Aorta (tissue), 5 donors: ENCODE measurements at regions of chr2 and their contacts with region 1.

Region 1: GRCh38 chr2:168992591-168993349 is 38.4 kb downstream of the ABCB11 start:
- DNase-seq: no peak
- ATAC-seq: no peak
- H3K4me3 ChIP-seq: no peak overlapping the region
- H3K27ac ChIP-seq: no peak overlapping the region
- H3K4me1 ChIP-seq: no peaks in the 10 kb centered on the region
- H3K27me3 ChIP-seq: no peaks in the 10 kb centered on the region

Region 2: GRCh38 chr2:168961450-168962229 is 31.1 kb before region 1 on chr2:
- intact Hi-C with region 1: loop called in 1 of 2 experiments (anchors 2 kb)
- DNase-seq: no peak
- ATAC-seq: peak; percentile 90
- H3K4me3 ChIP-seq: no peak overlapping the region
- H3K27ac ChIP-seq: no peak overlapping the region
- H3K4me1 ChIP-seq: no peaks in the 10 kb centered on the region
- H3K27me3 ChIP-seq: no peaks in the 10 kb centered on the region

Region 3: DNA sequence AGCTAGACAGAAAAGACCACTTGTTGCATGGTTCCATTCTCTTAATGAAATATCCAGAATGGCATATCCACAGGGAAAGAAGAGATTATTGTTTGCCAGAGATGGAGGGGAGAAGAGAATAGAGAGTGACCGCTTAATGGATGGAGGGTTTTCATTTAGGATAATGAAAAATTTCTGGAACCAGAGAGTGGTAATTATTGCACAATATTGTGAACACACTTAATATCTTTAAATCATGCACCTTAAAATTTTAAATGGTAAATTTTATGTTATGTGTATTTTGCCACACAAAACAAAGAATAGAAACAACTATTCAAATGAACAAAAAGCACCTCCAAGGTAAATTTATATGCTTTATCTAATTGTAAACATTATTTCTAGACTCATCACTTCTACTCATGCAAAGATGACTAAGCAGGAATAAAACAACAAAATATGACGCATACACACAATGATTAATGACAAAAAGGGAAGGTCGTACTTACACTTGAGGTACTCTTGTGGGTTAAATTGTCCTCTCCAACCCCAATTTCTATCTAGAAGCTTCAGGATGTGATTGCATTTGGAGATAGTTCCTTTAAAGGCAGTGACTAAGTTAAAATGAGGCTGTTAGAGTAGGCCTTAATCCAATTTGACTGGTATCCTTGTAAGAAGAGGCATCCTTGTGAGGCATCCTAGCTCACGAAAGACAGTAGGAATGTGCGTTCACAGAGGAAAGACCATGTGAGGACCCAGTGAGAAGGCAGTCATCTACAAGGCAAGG is 57.9 kb after region 1 on chr2:
- intact Hi-C with region 1: no loop called
- DNase-seq: no peak
- ATAC-seq: no peak
- H3K4me3 ChIP-seq: no peak overlapping the region
- H3K27ac ChIP-seq: no peak overlapping the region
- H3K4me1 ChIP-seq: no peaks in the 10 kb centered on the region
- H3K27me3 ChIP-seq: no peaks in the 10 kb centered on the region

Region 4: DNA sequence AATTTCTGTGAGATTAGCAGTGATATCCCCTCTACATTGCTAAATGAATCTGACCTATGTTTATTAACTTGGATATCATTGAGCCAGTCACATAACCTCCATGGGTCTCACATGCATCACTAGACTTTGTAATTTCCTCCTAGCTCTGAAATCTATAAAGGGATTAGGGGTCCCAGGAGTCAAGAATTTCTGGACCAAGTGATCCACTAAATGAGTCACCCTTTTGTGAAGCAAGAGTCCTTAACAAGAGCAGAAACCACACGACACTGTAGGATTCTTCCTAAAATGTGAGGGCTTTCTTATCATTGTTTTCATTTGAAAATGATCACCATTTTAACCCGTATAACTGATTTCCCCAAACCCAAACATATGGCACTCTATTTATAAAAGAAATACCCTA is 166.9 kb after region 1 on chr2:
- intact Hi-C with region 1: no loop called
- DNase-seq: no peak
- ATAC-seq: no peak
- H3K4me3 ChIP-seq: no peak overlapping the region
- H3K27ac ChIP-seq: no peak overlapping the region
- H3K4me1 ChIP-seq: peaks cover 0 to 2% of the 10 kb centered on the region in 2 donors
- H3K27me3 ChIP-seq: no peaks in the 10 kb centered on the region